ENCODE measurements at regions of chr12 and their contacts with region 1.

Region 1: GRCh38 chr12:32755654-32756475 is at the start of gene YARS2:
- DNase-seq: peak; percentile 92
- H3K4me3 Mint-ChIP-seq: peak within 1 kb of the TSS; percentile 92
- H3K27ac Mint-ChIP-seq: peak within 1 kb of the TSS; percentile 88
- H3K4me1 Mint-ChIP-seq: peaks cover 21% of the 10 kb centered on the region
- H3K27me3 Mint-ChIP-seq: no peaks in the 10 kb centered on the region
- total RNA-seq, gene YARS2: 15.7 to 24.0 TPM

Region 2: GRCh38 chr12:31658471-31659086 is 1097.3 kb before region 1 on chr12:
- CTCF ChIA-PET with region 1: interaction called, 13 read pairs
- POLR2A ChIA-PET with region 1: no interaction called
- DNase-seq: no peak
- H3K4me3 Mint-ChIP-seq: peak overlapping the region; percentile 99
- H3K27ac Mint-ChIP-seq: peak overlapping the region; percentile 100
- H3K4me1 Mint-ChIP-seq: peaks cover 18% of the 10 kb centered on the region
- H3K27me3 Mint-ChIP-seq: no peaks in the 10 kb centered on the region

Region 3: DNA sequence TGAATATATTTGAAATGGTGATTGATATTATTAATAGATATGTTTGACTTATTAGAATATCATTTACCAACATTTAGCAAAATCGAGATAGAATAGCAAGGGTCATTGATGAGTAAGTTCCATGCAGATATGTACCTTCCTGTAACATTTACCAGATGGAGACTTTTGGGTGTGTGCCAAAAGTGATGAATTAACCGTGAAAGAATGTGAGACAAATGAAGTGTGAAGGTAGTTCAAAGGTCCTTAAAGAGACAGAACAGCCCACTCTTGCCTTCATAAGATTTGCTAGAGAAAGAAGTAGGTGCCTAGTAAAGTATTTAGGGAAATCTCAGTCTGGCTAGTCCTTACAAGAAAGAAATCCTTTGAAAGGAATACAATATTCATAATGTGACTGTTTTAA is 311.0 kb before region 1 on chr12:
- CTCF ChIA-PET with region 1: no interaction called
- POLR2A ChIA-PET with region 1: no interaction called
- DNase-seq: no peak
- H3K4me3 Mint-ChIP-seq: no peak overlapping the region
- H3K27ac Mint-ChIP-seq: no peak overlapping the region
- H3K4me1 Mint-ChIP-seq: peaks cover 4% of the 10 kb centered on the region
- H3K27me3 Mint-ChIP-seq: no peaks in the 10 kb centered on the region

Region 4: GRCh38 chr12:32727237-32727636 is 28.6 kb before region 1 on chr12:
- CTCF ChIA-PET with region 1: interaction called, 12 read pairs
- POLR2A ChIA-PET with region 1: interaction called, 3 read pairs
- DNase-seq: no peak
- H3K4me3 Mint-ChIP-seq: no peak overlapping the region
- H3K27ac Mint-ChIP-seq: no peak overlapping the region
- H3K4me1 Mint-ChIP-seq: peaks cover 2% of the 10 kb centered on the region
- H3K27me3 Mint-ChIP-seq: no peaks in the 10 kb centered on the region

Region 5: DNA sequence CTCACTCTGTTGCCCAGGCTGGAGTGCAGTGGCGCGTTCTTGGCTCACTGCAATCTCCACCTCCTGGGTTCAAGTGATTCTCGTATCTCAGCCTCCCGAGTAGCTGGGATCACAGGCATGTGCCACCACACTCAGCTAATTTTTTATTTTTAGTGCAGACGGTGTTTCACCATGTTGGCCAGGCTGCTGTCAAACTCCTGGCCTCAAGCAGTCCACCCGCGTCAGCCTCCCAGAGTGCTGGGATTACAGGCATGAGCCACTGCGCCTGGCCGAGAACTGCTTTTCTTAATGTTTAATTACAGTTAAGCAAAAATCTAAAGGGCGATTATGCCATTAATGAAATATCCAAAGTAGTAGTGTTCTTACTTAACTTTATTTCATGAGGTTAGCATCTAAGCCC is 13.7 kb before region 1 on chr12:
- CTCF ChIA-PET with region 1: interaction called, 10 read pairs
- POLR2A ChIA-PET with region 1: no interaction called
- DNase-seq: no peak
- H3K4me3 Mint-ChIP-seq: no peak overlapping the region
- H3K27ac Mint-ChIP-seq: no peak overlapping the region
- H3K4me1 Mint-ChIP-seq: peaks cover 11% of the 10 kb centered on the region
- H3K27me3 Mint-ChIP-seq: no peaks in the 10 kb centered on the region

Region 6: GRCh38 chr12:32801269-32801980 is 45.6 kb after region 1 on chr12:
- CTCF ChIA-PET with region 1: no interaction called
- POLR2A ChIA-PET with region 1: no interaction called
- DNase-seq: no peak
- H3K4me3 Mint-ChIP-seq: no peak overlapping the region
- H3K27ac Mint-ChIP-seq: no peak overlapping the region
- H3K4me1 Mint-ChIP-seq: no peaks in the 10 kb centered on the region
- H3K27me3 Mint-ChIP-seq: no peaks in the 10 kb centered on the region

Region 7: GRCh38 chr12:34022079-34022830 is 1266.4 kb after region 1 on chr12 and contains the start of gene ALG10:
- CTCF ChIA-PET with region 1: interaction called, 20 read pairs
- POLR2A ChIA-PET with region 1: no interaction called
- DNase-seq: peak; percentile 97
- H3K4me3 Mint-ChIP-seq: peak within 1 kb of the TSS; percentile 98
- H3K27ac Mint-ChIP-seq: peak within 1 kb of the TSS; percentile 99
- H3K4me1 Mint-ChIP-seq: peaks cover 28% of the 10 kb centered on the region
- H3K27me3 Mint-ChIP-seq: no peaks in the 10 kb centered on the region
- total RNA-seq, gene ALG10: 17.5 to 21.4 TPM

Measured in activated CD4-positive, alpha-beta T cell treated with anti-CD3 and anti-CD28 coated beads, Interleukin-2, amount 10 ng/mL, durations not matched to agents 7 days and 5 days (primary cell).